ENCODE measurements at regions of chr1 and their contacts with region 1.

Region 1: GRCh38 chr1:45490626-45491486 is at the start of gene TESK2:
- DNase-seq: peak; percentile 100
- H3K4me3 ChIP-seq: peak within 1 kb of the TSS; percentile 72 to 92 (median 83)
- H3K27ac ChIP-seq: peak within 1 kb of the TSS; percentile 49
- H3K4me1 ChIP-seq: peaks cover 7% of the 10 kb centered on the region
- H3K27me3 ChIP-seq: no peaks in the 10 kb centered on the region
- CTCF ChIP-seq: no peak
- total RNA-seq, gene TESK2: 3.8 to 4.5 TPM

Region 2: GRCh38 chr1:44714944-44715571 is 775.8 kb before region 1 on chr1:
- CTCF ChIA-PET with region 1: no interaction called
- dilution Hi-C with region 1: no loop called
- in situ Hi-C with region 1: no loop called
- intact Hi-C with region 1: loop called (anchors 5 kb)
- DNase-seq: peak; percentile 66
- H3K4me3 ChIP-seq: no peak overlapping the region
- H3K27ac ChIP-seq: no peak overlapping the region
- H3K4me1 ChIP-seq: no peaks in the 10 kb centered on the region
- H3K27me3 ChIP-seq: no peaks in the 10 kb centered on the region
- CTCF ChIP-seq: peak; percentile 94 to 99

Region 3: DNA sequence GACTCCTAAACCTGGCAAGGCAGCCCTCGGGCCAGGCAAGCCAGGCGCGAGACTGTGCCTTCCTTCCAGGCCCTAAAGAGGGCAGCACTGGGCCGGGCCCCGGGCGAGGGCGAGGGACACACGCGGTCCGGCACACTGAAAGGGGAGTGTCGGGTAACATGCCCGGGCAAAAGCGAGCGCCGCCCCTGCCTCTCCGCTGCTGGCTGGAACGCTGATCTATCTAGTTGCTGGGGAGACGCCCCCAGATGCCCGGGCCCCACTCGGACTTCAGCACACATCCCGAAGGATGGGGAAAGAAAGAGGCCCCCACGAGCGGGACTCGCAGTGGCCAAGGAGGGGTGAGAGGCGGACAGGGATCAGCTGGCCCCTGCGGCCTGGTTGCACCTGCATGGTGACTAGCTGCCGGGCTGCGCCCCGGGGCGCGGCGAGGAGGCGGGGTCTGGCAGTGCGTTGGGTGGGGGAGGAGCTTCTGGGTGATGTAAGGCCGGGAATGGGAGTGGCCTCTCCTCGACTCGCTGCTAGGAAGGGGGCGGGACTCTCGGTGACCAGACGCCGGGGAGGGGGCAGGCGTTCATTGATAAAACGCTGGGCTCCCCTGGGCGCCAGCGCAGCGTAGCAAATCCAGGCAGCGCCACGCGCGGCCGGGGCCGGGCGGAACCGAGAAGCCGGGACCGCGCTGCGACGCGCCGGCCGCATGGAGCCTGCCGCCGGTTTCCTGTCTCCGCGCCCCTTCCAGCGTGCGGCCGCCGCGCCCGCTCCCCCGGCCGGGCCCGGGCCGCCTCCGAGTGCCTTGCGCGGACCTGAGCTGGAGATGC is 690.9 kb before region 1 on chr1 and contains the start of gene PLK3:
- CTCF ChIA-PET with region 1: no interaction called
- dilution Hi-C with region 1: no loop called
- in situ Hi-C with region 1: loop called in 1 of 2 experiments (anchors 25 kb)
- intact Hi-C with region 1: loop called (anchors 10 kb)
- DNase-seq: peak; percentile 98
- H3K4me3 ChIP-seq: peak within 1 kb of the TSS; percentile 33 to 89 (median 63)
- H3K27ac ChIP-seq: peak within 1 kb of the TSS; percentile 89
- H3K4me1 ChIP-seq: peaks cover 30% of the 10 kb centered on the region
- H3K27me3 ChIP-seq: no peaks in the 10 kb centered on the region
- CTCF ChIP-seq: peak; percentile 89 to 91
- total RNA-seq, gene PLK3: 53.5 to 101 TPM

Region 4: GRCh38 chr1:45011837-45012638 is 478.8 kb before region 1 on chr1 and contains the start of gene UROD:
- CTCF ChIA-PET with region 1: no interaction called
- dilution Hi-C with region 1: no loop called
- in situ Hi-C with region 1: loop called (anchors 10 kb)
- intact Hi-C with region 1: loop called (anchors 1 kb)
- DNase-seq: peak; percentile 93
- H3K4me3 ChIP-seq: peak within 1 kb of the TSS; percentile 59 to 86 (median 82)
- H3K27ac ChIP-seq: peak within 1 kb of the TSS; percentile 69
- H3K4me1 ChIP-seq: peaks cover 24% of the 10 kb centered on the region
- H3K27me3 ChIP-seq: no peaks in the 10 kb centered on the region
- CTCF ChIP-seq: no peak
- total RNA-seq, gene UROD: 100 to 108 TPM

Region 5: GRCh38 chr1:45339789-45340570 is 150.9 kb before region 1 on chr1 and contains the starts of genes MUTYH and TOE1:
- CTCF ChIA-PET with region 1: no interaction called
- dilution Hi-C with region 1: no loop called
- in situ Hi-C with region 1: loop called in 1 of 2 experiments (anchors 5 kb)
- intact Hi-C with region 1: loop called (anchors 5 kb)
- DNase-seq: peak; percentile 91
- H3K4me3 ChIP-seq: peak within 1 kb of the TSS; percentile 58 to 75 (median 68)
- H3K27ac ChIP-seq: peak within 1 kb of the TSS; percentile 84
- H3K4me1 ChIP-seq: peaks cover 12% of the 10 kb centered on the region
- H3K27me3 ChIP-seq: no peaks in the 10 kb centered on the region
- CTCF ChIP-seq: no peak
- total RNA-seq, gene MUTYH: 9.8 to 24.8 TPM
- total RNA-seq, gene TOE1: 9.0 to 12.8 TPM

Region 6: GRCh38 chr1:45359882-45360513 is 130.9 kb before region 1 on chr1:
- CTCF ChIA-PET with region 1: interaction called, 6 read pairs
- dilution Hi-C with region 1: no loop called
- in situ Hi-C with region 1: loop called in 1 of 2 experiments (anchors 5 kb)
- intact Hi-C with region 1: loop called (anchors 1 kb)
- DNase-seq: peak; percentile 47
- H3K4me3 ChIP-seq: no peak overlapping the region
- H3K27ac ChIP-seq: peak overlapping the region; percentile 32
- H3K4me1 ChIP-seq: peaks cover 13% of the 10 kb centered on the region
- H3K27me3 ChIP-seq: no peaks in the 10 kb centered on the region
- CTCF ChIP-seq: peak; percentile 55 to 59

Measured in mammary epithelial cell (primary cell).